Endothelial cell of umbilical vein (primary cell): ENCODE measurements at regions of chr11 and their contacts with region 1.

Region 1: DNA sequence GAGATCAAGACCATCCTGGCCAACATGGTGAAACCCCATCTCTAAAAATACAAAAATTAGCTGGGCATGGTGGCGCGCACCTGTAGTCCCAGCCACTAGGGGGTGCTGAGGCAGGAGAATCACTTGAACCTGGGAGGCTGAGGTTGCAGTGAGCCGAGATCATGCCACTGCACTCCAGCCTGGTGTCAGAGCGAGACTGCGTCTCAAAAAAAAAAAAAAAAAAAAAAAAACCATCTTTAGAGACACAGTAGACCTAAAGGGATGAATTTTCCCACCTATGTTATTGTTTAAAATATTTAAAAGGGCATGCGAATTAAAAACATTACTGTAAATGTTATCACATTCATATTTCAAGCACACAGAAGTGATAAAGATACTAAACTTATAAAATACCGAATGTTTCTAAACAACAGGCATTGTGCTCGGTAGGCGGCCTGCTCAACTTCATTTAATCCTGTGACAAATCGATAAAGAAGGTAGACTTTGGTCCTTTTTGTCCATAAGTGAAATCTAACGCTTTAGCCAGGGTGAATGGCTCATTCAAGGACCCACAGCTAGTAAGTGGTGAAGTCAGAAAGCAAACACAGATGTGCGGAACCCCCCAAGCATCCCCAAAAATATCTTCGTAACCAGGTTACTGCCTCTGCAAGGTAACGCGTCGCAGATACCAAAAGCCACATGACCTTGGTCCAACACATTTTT is 16.1 kb downstream of the NCAPD3 start:
- DNase-seq: peak; percentile 10
- H3K4me3 ChIP-seq: no peak overlapping the region
- H3K27ac ChIP-seq: no peak overlapping the region
- H3K4me1 ChIP-seq: no peaks in the 10 kb centered on the region
- H3K27me3 ChIP-seq: no peaks in the 10 kb centered on the region
- CTCF ChIP-seq: peak; percentile 39 to 54
- POLR2A ChIP-seq: no peak

Region 2: GRCh38 chr11:134235399-134235798 is 27.7 kb after region 1 on chr11:
- CTCF ChIA-PET with region 1: interaction called, 14 read pairs
- POLR2A ChIA-PET with region 1: no interaction called
- dilution Hi-C with region 1: no loop called
- intact Hi-C with region 1: no loop called
- DNase-seq: no peak
- H3K4me3 ChIP-seq: no peak overlapping the region
- H3K27ac ChIP-seq: no peak overlapping the region
- H3K4me1 ChIP-seq: peaks cover 7% of the 10 kb centered on the region
- H3K27me3 ChIP-seq: no peaks in the 10 kb centered on the region
- CTCF ChIP-seq: no peak
- POLR2A ChIP-seq: no peak

Region 3: GRCh38 chr11:134244655-134245054 is 37.0 kb after region 1 on chr11:
- CTCF ChIA-PET with region 1: interaction called, 20 read pairs
- POLR2A ChIA-PET with region 1: no interaction called
- dilution Hi-C with region 1: no loop called
- intact Hi-C with region 1: loop called (anchors 1 kb)
- DNase-seq: peak; percentile 36
- H3K4me3 ChIP-seq: no peak overlapping the region
- H3K27ac ChIP-seq: no peak overlapping the region
- H3K4me1 ChIP-seq: no peaks in the 10 kb centered on the region
- H3K27me3 ChIP-seq: no peaks in the 10 kb centered on the region
- CTCF ChIP-seq: peak; percentile 39 to 63
- POLR2A ChIP-seq: no peak